GM12878 (cell line): ENCODE measurements at regions of chr20 and their contacts with region 1.

Region 1: DNA sequence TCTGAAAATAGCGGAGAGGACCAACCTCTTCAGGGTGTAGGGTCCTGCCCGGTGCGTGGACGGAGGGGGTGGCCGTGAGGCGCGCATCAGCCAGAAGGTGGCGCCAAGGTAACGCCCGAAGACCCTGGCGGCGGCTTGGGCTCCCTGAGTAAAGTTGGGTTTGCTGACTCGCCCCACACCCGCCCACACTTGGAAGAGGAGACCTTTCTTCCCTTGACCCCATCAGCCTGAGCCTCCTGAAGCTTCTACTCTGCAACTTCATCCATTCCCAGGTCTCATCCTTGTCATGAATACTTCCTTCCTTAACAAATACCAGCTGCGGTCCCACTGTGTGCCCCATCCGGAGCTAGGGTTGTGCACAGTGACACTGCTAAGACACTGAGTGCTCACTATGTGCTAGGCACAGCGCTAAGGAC is 14.6 kb downstream of the CD40 start:
- DNase-seq: no peak
- ATAC-seq: peak; percentile 76
- H3K4me3 ChIP-seq: no peak overlapping the region
- H3K27ac ChIP-seq: no peak overlapping the region
- H3K4me1 ChIP-seq: peaks cover 21% of the 10 kb centered on the region
- H3K27me3 ChIP-seq: peaks cover 0 to 3% of the 10 kb centered on the region in 2 experiments; a peak in 2 of 4 replicates
- CTCF ChIP-seq: peak; percentile 82 to 87 (median 87)
- EP300 ChIP-seq: no peak
- POLR2A ChIP-seq: peak; percentile 57
- RAD21 ChIP-seq: peak; percentile 80

Region 2: DNA sequence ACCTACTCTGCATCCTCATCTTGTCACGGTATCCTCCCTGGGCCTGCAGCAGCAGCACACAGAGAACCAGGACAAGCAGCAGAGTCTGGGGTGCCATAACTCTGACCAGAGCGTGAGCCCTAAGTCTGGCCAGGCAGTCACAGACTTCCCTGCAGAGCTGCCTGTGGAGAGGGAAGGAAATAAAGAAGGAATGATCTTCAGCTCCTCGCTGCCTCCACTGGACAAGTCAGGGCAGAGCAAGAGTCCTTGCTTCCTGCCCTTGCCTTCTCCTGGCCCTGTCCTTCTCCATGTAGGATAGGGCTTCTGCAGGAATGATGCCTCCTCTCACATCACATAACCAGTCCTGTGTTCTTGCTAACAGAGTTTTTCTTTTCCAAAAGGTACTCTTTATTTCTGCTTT is 446.8 kb before region 1 on chr20:
- CTCF ChIA-PET with region 1: no interaction called
- POLR2A ChIA-PET with region 1: no interaction called
- RAD21 ChIA-PET with region 1: no interaction called
- SMC1A ChIA-PET with region 1: no interaction called
- in situ Hi-C with region 1: no loop called
- intact Hi-C with region 1: no loop called
- DNase-seq: no peak
- ATAC-seq: no peak
- H3K4me3 ChIP-seq: no peak overlapping the region
- H3K27ac ChIP-seq: no peak overlapping the region
- H3K4me1 ChIP-seq: no peaks in the 10 kb centered on the region
- H3K27me3 ChIP-seq: no peaks in the 10 kb centered on the region
- CTCF ChIP-seq: no peak
- EP300 ChIP-seq: no peak
- POLR2A ChIP-seq: no peak
- RAD21 ChIP-seq: no peak

Region 3: GRCh38 chr20:45934586-45935415 is 197.9 kb before region 1 on chr20 and contains the start of gene PCIF1:
- CTCF ChIA-PET with region 1: no interaction called
- POLR2A ChIA-PET with region 1: no interaction called
- RAD21 ChIA-PET with region 1: no interaction called
- SMC1A ChIA-PET with region 1: no interaction called
- in situ Hi-C with region 1: no loop called
- intact Hi-C with region 1: no loop called
- DNase-seq: peak; percentile 93
- ATAC-seq: peak; percentile 87
- H3K4me3 ChIP-seq: peak within 1 kb of the TSS; percentile 81
- H3K27ac ChIP-seq: peak within 1 kb of the TSS; percentile 97
- H3K4me1 ChIP-seq: peaks cover 5% of the 10 kb centered on the region; the same call in 1 of the 2 replicates
- H3K27me3 ChIP-seq: no peaks in the 10 kb centered on the region
- CTCF ChIP-seq: no peak
- EP300 ChIP-seq: no peak
- POLR2A ChIP-seq: peak; percentile 98
- RAD21 ChIP-seq: no peak
- polyA plus RNA-seq, gene PCIF1: 8.4 to 10.1 TPM

Region 4: GRCh38 chr20:46099491-46100287 is 33.0 kb before region 1 on chr20:
- CTCF ChIA-PET with region 1: interaction called, 11 read pairs
- POLR2A ChIA-PET with region 1: no interaction called
- RAD21 ChIA-PET with region 1: interaction called, 7 read pairs
- SMC1A ChIA-PET with region 1: interaction called, 9 read pairs
- in situ Hi-C with region 1: no loop called
- intact Hi-C with region 1: no loop called
- DNase-seq: no peak
- ATAC-seq: peak; percentile 99
- H3K4me3 ChIP-seq: peak overlapping the region; percentile 45; the same call in 1 of the 2 replicates
- H3K27ac ChIP-seq: no peak overlapping the region
- H3K4me1 ChIP-seq: peaks cover 9% of the 10 kb centered on the region; the same call in 1 of the 2 replicates
- H3K27me3 ChIP-seq: no peaks in the 10 kb centered on the region; a peak in 1 of 4 replicates
- CTCF ChIP-seq: peak; percentile 35 to 68 (median 64); a peak in 4 of 6 replicates
- EP300 ChIP-seq: no peak
- POLR2A ChIP-seq: no peak
- RAD21 ChIP-seq: peak; percentile 65

Region 5: DNA sequence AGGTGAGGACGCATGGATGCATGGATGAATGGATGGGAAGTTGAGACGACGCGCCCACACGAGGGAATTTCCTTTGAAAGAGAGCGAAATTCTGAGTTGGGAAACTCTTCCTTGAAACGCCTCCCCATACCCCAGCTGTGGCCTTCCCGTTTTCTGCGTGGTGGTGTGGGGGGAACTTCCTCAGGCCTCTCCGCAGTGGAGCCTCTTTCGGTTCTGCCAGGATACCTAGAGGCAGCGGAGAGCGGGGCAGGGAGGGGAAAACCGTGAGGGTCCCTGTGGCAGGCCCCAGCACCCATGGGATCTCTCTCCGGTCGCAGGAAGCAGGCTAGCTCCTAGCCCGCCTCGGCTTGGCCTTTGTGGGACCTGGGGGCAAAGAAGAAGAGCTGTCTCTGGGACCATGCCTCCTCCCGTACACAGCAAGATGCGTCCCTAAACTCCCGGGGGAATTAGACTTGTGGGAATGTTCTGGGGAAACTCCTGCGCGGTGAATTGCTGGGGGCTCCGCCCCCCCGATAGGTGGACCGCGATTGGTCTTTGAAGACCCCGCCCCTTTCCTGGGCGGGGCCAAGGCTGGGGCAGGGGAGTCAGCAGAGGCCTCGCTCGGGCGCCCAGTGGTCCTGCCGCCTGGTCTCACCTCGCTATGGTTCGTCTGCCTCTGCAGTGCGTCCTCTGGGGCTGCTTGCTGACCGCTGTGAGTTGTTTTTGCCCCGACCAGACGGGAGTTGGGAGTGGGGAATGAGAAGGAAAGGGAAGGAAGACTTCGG is 14.8 kb before region 1 on chr20 and contains the start of gene CD40:
- CTCF ChIA-PET with region 1: interaction called, 63 read pairs
- POLR2A ChIA-PET with region 1: interaction called, 8 read pairs
- RAD21 ChIA-PET with region 1: interaction called, 10 read pairs
- SMC1A ChIA-PET with region 1: interaction called, 39 read pairs
- in situ Hi-C with region 1: no loop called
- intact Hi-C with region 1: no loop called
- DNase-seq: peak; percentile 76
- ATAC-seq: peak; percentile 90
- H3K4me3 ChIP-seq: peak within 1 kb of the TSS; percentile 96
- H3K27ac ChIP-seq: peak within 1 kb of the TSS; percentile 76
- H3K4me1 ChIP-seq: peaks cover 6% of the 10 kb centered on the region
- H3K27me3 ChIP-seq: no peaks in the 10 kb centered on the region
- CTCF ChIP-seq: no peak
- EP300 ChIP-seq: 0 out of 4 replicates have a peak, but pooled peaks of 1 of the 2 experiments have one; percentile 26
- POLR2A ChIP-seq: peak; percentile 97
- RAD21 ChIP-seq: no peak
- polyA plus RNA-seq, gene CD40: 40.8 to 71.7 TPM

Region 6: GRCh38 chr20:46192376-46192944 is 59.7 kb after region 1 on chr20:
- CTCF ChIA-PET with region 1: no interaction called
- POLR2A ChIA-PET with region 1: no interaction called
- RAD21 ChIA-PET with region 1: no interaction called
- SMC1A ChIA-PET with region 1: no interaction called
- in situ Hi-C with region 1: no loop called
- intact Hi-C with region 1: no loop called
- DNase-seq: no peak
- ATAC-seq: no peak
- H3K4me3 ChIP-seq: no peak overlapping the region
- H3K27ac ChIP-seq: no peak overlapping the region
- H3K4me1 ChIP-seq: no peaks in the 10 kb centered on the region
- H3K27me3 ChIP-seq: no peaks in the 10 kb centered on the region; a peak in 1 of 4 replicates
- CTCF ChIP-seq: no peak
- EP300 ChIP-seq: no peak
- POLR2A ChIP-seq: no peak
- RAD21 ChIP-seq: no peak

Region 7: GRCh38 chr20:46349035-46349741 is 216.5 kb after region 1 on chr20:
- CTCF ChIA-PET with region 1: interaction called, 15 read pairs
- POLR2A ChIA-PET with region 1: no interaction called
- RAD21 ChIA-PET with region 1: interaction called, 4 read pairs
- SMC1A ChIA-PET with region 1: interaction called, 5 read pairs
- in situ Hi-C with region 1: no loop called
- intact Hi-C with region 1: no loop called
- DNase-seq: no peak
- ATAC-seq: peak; percentile 28
- H3K4me3 ChIP-seq: peak overlapping the region; percentile 48; the same call in 1 of the 2 replicates
- H3K27ac ChIP-seq: peak overlapping the region; percentile 91
- H3K4me1 ChIP-seq: peaks cover 33% of the 10 kb centered on the region
- H3K27me3 ChIP-seq: no peaks in the 10 kb centered on the region
- CTCF ChIP-seq: peak; percentile 74 to 83 (median 82)
- EP300 ChIP-seq: no peak
- POLR2A ChIP-seq: peak; percentile 18; the same call in 1 of the 2 replicates
- RAD21 ChIP-seq: peak; percentile 67